Activated CD8-positive, alpha-beta memory T cell treated with anti-CD3 and anti-CD28 coated beads, Interleukin-2, amount 10 ng/mL, durations not matched to agents 7 days and 5 days (primary cell): ENCODE measurements at regions of chr14 and their contacts with region 1.

Region 1: DNA sequence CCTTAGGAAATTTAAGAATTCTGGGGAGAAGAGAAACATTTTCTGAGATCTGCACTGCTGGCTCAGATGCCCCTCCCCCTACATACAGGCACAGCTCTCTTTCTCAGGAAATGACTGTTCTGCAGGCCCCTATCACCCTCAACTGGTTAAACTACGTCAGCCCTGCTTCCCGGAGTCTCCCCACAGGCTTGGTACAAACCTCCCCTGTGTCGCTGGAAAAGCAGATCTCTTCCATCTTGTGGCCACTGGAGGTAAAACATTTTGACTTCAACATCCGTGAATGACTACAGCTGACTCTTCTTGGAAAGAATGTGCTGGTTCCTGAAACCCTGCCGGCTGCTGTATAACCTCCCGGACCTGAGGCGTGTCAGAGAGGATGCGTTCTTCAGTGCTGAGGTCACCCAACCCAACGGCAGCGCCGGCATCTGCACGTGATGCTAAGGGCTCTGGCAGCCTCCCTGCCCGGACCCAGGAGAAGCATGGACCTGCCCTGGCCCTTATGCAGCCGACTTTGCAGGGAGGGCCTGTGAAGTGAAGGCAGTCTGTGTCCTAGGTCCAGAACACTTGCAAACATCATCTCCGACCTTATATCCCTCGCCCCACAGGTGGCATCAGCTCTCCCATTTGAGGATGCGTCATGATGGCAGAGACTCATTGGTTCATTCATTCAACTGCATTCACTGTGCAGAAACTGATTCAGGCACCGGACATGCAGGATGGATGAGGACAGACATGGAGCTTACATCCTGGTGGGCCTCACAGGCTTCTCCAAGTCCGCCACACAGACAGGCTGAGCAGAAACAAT is 129.3 kb downstream of the GCH1 start:
- DNase-seq: peak; percentile 93
- ATAC-seq: peak; percentile 83
- H3K4me3 Mint-ChIP-seq: peak overlapping the region; percentile 43
- H3K27ac Mint-ChIP-seq: peak overlapping the region; percentile 84
- H3K4me1 Mint-ChIP-seq: peaks cover 47% of the 10 kb centered on the region
- H3K27me3 Mint-ChIP-seq: peaks cover 58% of the 10 kb centered on the region

Region 2: DNA sequence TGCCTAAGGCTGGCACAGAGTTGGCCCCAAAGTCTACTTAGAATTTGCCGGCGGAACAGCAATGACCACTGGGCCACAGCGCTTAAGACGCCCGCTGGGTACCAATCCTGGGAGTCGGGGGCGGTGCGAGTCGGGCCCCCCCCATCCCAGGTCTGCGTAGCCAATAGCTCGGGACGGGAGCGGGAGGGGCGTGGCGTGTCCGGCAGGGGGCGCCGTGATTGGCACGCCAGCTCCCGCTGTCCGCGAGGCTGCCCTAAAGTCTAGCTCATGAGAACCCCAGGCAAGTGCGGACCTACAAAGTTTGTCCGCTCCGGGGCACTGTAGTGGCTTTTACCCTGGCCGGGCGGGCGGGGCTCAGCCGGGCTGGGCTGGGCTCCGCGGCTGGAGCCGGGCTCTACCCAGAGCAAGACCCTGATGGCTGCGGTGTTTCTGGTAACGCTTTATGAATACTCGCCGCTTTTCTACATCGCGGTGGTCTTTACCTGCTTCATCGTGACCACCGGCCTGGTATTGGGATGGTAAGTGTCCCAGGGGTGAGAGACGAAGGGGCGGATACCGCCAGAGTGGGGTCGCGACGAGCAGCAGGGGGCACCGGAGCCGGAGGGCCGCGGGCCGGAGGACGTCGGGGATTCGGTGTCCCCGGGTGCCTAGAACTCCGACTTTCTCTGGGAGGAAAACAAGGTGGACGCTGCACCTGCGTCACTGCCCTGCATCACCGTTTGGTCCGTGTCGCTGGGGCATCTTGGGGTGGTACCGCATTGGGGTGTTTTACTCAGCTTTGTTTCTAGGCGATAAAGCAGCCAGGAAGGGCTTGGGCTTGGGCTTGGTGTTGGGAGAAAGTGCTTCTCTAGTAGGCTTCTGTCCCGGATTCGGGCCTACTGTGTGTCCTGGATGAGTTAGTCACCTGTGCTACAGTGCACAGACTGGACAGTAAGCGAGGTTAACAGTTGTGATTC is 263.5 kb before region 1 on chr14 and contains the start of gene CGRRF1:
- CTCF ChIA-PET with region 1: interaction called, 16 read pairs
- DNase-seq: peak; percentile 98
- ATAC-seq: peak; percentile 99
- H3K4me3 Mint-ChIP-seq: peak within 1 kb of the TSS; percentile 87
- H3K27ac Mint-ChIP-seq: peak within 1 kb of the TSS; percentile 84
- H3K4me1 Mint-ChIP-seq: peaks cover 26% of the 10 kb centered on the region
- H3K27me3 Mint-ChIP-seq: peaks cover 5% of the 10 kb centered on the region
- total RNA-seq, gene CGRRF1: 10.0 to 10.7 TPM

Region 3: DNA sequence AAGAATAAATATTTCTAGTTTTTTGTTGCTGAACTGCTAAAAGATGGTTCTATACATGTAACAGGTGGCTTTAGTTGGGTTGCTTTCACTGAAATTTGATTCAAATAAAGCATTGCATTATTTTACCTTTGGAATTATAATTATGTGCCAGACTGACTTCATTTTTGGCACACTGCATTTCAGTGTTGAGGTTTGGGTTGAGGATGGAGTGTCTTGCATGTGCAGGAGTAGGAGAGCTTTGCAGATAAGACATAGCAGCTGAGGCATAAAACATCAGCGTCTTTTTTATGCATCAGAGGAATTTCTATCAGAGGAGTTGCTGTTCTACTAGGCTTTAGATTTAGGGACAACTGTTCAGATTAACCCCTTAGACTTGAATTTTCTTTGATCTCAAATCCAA is 189.3 kb before region 1 on chr14:
- CTCF ChIA-PET with region 1: interaction called, 20 read pairs
- DNase-seq: no peak
- ATAC-seq: no peak
- H3K4me3 Mint-ChIP-seq: no peak overlapping the region
- H3K27ac Mint-ChIP-seq: no peak overlapping the region
- H3K4me1 Mint-ChIP-seq: peaks cover 12% of the 10 kb centered on the region
- H3K27me3 Mint-ChIP-seq: peaks cover 33% of the 10 kb centered on the region

Region 4: DNA sequence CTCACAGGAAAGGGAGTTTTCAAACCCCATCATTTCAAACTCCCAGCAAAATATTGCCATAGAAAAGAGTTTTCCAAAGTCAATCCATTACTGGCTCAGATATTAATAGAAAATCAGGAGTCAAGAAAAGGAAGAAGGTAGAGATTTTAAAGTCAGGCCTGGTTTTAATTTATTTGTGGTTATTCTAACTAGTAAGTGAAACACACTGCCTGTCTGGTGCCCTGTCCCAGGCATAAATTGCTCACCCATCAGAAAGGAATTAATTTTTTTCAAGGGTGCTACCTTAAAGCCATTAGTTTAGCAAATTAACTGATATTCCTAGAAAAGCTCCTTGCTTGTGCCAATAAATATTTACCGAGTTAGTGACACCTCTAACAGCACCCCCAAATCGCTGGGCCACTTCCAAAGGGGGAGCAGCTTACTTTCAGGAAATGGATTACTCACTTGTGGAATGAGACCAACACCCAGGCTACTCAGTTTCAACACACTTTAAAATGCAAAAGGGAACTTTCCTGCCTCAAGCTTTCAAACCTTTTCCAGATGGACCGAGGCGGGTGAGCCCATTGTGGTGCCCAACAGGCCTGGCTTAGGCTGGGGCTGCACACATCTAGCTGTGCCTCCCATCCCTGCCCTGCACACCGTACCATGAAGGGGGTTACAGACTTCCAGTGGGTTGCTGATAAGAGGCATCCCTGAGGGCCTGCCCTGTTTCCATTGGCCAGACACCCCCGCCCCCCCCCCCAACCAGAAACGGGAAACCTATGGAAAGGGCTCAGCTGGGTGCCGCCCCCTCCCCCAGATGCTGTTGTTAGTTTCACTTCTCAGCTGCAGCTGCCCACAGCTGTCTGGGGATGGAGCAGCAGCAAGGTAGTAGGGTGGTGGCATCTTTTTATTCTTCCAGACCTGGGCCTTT is 89.2 kb before region 1 on chr14:
- CTCF ChIA-PET with region 1: interaction called, 17 read pairs
- DNase-seq: no peak
- ATAC-seq: no peak
- H3K4me3 Mint-ChIP-seq: no peak overlapping the region
- H3K27ac Mint-ChIP-seq: no peak overlapping the region
- H3K4me1 Mint-ChIP-seq: peaks cover 22% of the 10 kb centered on the region
- H3K27me3 Mint-ChIP-seq: peaks cover 72% of the 10 kb centered on the region

Region 5: GRCh38 chr14:54722781-54723432 is 50.5 kb before region 1 on chr14:
- CTCF ChIA-PET with region 1: interaction called, 40 read pairs
- DNase-seq: no peak
- ATAC-seq: peak; percentile 45
- H3K4me3 Mint-ChIP-seq: no peak overlapping the region
- H3K27ac Mint-ChIP-seq: no peak overlapping the region
- H3K4me1 Mint-ChIP-seq: peaks cover 8% of the 10 kb centered on the region
- H3K27me3 Mint-ChIP-seq: peaks cover 64% of the 10 kb centered on the region

Region 6: GRCh38 chr14:54792288-54792687 is 18.9 kb after region 1 on chr14:
- CTCF ChIA-PET with region 1: interaction called, 17 read pairs
- DNase-seq: no peak
- ATAC-seq: no peak
- H3K4me3 Mint-ChIP-seq: no peak overlapping the region
- H3K27ac Mint-ChIP-seq: no peak overlapping the region
- H3K4me1 Mint-ChIP-seq: no peaks in the 10 kb centered on the region
- H3K27me3 Mint-ChIP-seq: peaks cover 3% of the 10 kb centered on the region